Thyroid gland (tissue), 4 donors: ENCODE measurements at regions of chr11 and their contacts with region 1.

Region 1: GRCh38 chr11:34357701-34358257 is at the start of gene ABTB2:
- DNase-seq: peak; percentile 99
- H3K4me3 ChIP-seq: peak within 1 kb of the TSS; percentile 29 to 35 (median 34)
- H3K27ac ChIP-seq: peak within 1 kb of the TSS; percentile 19 to 75 (median 47)
- H3K4me1 ChIP-seq: peaks cover 15 to 20% of the 10 kb centered on the region in 2 donors
- H3K27me3 ChIP-seq: no peaks in the 10 kb centered on the region
- CTCF ChIP-seq: peak in 1 of 6 experiments; percentile 21
- POLR2A ChIP-seq: peak; percentile 68 to 99
- total RNA-seq, gene ABTB2: 1.2 to 5.0 (median 3.3) TPM

Region 2: DNA sequence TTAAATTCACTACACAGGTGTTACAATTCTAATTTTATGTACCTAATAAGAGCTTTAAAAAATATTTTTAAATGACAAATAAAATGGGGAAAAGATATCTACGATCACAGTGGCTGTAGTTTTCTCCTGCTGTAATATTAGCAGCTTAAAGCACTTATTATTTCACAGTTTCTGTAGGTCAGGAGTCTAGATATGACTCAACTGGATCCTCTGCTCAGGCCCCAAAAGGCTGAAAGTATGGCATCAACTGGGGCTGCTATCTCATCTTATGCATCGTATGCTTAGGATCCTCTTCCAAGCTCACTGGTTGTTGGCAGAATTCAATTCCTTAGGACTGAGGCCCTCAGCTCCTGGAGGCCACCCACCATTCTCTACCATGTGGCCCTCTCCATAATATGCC is 596.3 kb before region 1 on chr11:
- intact Hi-C with region 1: no loop called
- DNase-seq: no peak
- H3K4me3 ChIP-seq: no peak overlapping the region
- H3K27ac ChIP-seq: no peak overlapping the region
- H3K4me1 ChIP-seq: no peaks in the 10 kb centered on the region
- H3K27me3 ChIP-seq: no peaks in the 10 kb centered on the region
- CTCF ChIP-seq: no peak
- POLR2A ChIP-seq: no peak

Region 3: DNA sequence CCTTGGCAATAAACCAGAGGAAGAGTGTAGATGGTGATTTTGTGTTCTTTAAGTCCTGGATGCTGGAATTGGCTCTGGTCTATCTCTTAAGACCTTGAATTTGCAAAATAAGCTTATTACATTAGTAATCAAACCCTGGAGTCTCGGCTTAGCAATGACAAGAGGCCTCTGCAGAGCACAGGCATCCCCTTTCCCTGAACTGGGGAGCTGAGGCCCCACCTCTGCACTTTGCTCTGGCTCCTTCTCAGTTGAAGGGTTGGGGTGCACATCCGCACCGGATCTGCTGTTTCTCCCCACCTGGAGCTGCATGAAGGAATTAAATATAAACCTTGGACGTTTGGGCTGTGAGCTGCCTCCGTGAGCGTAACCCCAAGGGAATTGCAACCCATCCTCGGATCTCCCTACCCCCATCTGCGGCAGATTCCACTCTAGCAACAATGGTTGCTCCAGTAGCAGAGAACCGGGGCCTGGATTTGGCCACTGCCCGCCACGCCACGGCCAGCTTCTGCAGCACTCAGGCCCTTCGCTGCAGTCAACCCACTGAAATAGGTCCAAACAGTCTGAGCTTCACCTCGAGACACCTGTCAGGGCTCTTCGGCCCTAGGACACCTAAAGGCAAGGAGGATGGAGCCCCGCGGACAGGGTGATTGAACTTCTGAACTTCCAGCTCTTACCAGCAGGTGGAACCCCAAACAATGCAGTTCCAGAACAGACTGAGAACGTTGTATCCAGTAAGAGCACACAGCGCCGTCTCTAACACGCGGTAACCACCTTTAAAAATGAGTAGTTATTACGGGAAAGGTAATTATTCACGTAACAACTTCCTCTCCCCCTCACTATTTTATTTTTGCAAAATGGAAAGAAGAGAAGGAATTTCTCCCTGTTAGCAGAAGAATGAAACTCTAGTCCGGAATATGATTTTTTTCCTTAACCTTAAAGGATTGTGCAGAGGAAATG is 361.0 kb before region 1 on chr11:
- intact Hi-C with region 1: loop called (anchors 2 kb)
- DNase-seq: peak; percentile 66 to 71
- H3K4me3 ChIP-seq: no peak overlapping the region
- H3K27ac ChIP-seq: no peak overlapping the region
- H3K4me1 ChIP-seq: peaks cover 0 to 6% of the 10 kb centered on the region in 2 donors
- H3K27me3 ChIP-seq: no peaks in the 10 kb centered on the region
- CTCF ChIP-seq: peak; percentile 67 to 81 (median 72)
- POLR2A ChIP-seq: no peak

Region 4: DNA sequence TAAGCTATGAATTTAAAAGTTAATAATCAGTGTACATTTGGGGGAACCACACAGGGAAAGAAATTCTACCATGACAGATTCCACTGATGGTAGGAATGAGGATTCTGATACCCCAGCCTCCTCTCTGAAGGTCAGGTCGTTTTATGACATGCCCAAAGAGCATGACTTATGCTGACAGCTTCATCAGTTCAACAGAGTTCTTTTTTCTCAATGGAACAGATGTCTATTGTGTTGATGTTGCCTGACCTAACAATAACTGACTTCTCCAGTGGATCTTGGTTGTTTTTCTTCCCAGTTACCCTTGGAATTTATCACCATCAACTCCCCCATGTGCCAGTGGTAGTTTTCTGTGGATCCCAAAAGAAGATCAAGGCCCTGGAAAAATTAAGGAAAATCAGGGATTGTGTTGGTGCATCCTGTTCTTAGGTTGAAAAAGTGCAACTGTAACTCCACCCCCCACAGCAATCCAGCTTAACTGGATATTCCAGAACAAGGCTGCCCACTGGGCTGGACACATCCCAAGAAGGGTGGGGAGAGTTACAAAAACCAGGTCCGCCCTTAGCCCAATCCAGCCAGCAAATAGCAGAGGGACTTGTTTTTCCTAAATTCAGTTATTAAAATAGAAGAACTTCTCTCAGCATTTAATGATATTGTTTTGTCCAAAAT is 49.5 kb after region 1 on chr11:
- intact Hi-C with region 1: no loop called
- DNase-seq: peak; percentile 40 to 41
- H3K4me3 ChIP-seq: no peak overlapping the region
- H3K27ac ChIP-seq: no peak overlapping the region
- H3K4me1 ChIP-seq: no peaks in the 10 kb centered on the region
- H3K27me3 ChIP-seq: no peaks in the 10 kb centered on the region
- CTCF ChIP-seq: no peak
- POLR2A ChIP-seq: no peak

Region 5: GRCh38 chr11:34512840-34513681 is 155.3 kb after region 1 on chr11:
- intact Hi-C with region 1: no loop called
- DNase-seq: peak; percentile 24 to 48
- H3K4me3 ChIP-seq: no peak overlapping the region
- H3K27ac ChIP-seq: no peak overlapping the region
- H3K4me1 ChIP-seq: no peaks in the 10 kb centered on the region
- H3K27me3 ChIP-seq: no peaks in the 10 kb centered on the region
- CTCF ChIP-seq: peak in 5 of 6 experiments; percentile 23 to 62 (median 46)
- POLR2A ChIP-seq: no peak

Region 6: GRCh38 chr11:34537656-34538055 is 179.9 kb after region 1 on chr11:
- intact Hi-C with region 1: no loop called
- DNase-seq: no peak
- H3K4me3 ChIP-seq: no peak overlapping the region
- H3K27ac ChIP-seq: no peak overlapping the region
- H3K4me1 ChIP-seq: no peaks in the 10 kb centered on the region
- H3K27me3 ChIP-seq: no peaks in the 10 kb centered on the region
- CTCF ChIP-seq: no peak
- POLR2A ChIP-seq: no peak